ENCODE measurements at regions of chr3 and their contacts with region 1.

Region 1: DNA sequence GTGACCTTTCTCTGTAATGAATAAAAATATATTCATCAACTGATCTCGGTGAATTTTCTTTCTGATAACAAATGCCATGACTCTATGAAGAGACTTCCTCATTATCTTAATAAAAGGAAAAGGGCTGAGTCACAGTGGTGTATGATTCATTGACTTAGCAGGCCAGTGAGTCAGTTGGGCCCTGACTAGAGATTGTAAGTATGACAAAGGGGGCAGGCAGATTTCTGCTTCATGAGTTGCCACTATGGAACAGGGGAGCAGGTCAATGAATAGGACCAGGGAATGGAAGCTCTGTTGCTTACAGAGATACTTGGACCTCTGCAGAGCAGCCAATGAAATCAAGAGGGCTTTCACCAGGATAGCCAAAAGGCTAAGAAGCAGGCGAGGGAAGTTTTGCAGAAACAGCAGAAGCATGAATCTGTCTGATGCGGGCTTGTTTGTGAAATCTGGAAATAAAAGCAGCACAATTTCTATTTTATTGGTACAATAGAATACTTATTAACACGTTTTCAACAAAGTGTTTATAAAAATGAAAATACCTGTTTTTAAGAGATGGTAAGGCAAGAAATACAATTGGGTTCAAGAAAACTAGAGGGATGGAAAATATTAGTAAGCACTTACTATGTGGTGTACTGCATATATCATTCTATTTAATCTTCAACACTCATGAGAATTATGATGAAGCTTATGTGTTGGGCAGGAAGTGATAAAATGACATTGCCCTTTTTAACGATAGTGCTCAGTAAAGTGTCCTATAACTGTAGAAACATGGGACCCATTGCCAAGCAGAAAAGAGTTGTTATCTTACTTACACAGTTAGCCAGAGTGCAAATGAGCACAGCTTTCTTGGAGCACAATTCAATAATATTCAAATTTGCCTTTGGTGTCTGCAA is 169.8 kb upstream of the MYRIP start:
- DNase-seq: peak; percentile 95
- H3K4me3 ChIP-seq: peak overlapping the region in 1 of 3 experiments; percentile 21
- H3K27ac ChIP-seq: peak overlapping the region; percentile 97
- H3K4me1 ChIP-seq: peaks cover 32% of the 10 kb centered on the region
- H3K27me3 ChIP-seq: no peaks in the 10 kb centered on the region
- CTCF ChIP-seq: no peak
- POLR2A ChIP-seq: no peak

Region 2: GRCh38 chr3:39501968-39502837 is 137.4 kb before region 1 on chr3:
- CTCF ChIA-PET with region 1: no interaction called
- POLR2A ChIA-PET with region 1: no interaction called
- dilution Hi-C with region 1: no loop called
- intact Hi-C with region 1: loop called (anchors 1 kb)
- DNase-seq: no peak
- H3K4me3 ChIP-seq: peak overlapping the region; percentile 49 to 64 (median 63)
- H3K27ac ChIP-seq: peak overlapping the region; percentile 46
- H3K4me1 ChIP-seq: peaks cover 23% of the 10 kb centered on the region
- H3K27me3 ChIP-seq: peaks cover 0 to 6% of the 10 kb centered on the region in 2 experiments
- CTCF ChIP-seq: no peak
- POLR2A ChIP-seq: no peak

Region 3: DNA sequence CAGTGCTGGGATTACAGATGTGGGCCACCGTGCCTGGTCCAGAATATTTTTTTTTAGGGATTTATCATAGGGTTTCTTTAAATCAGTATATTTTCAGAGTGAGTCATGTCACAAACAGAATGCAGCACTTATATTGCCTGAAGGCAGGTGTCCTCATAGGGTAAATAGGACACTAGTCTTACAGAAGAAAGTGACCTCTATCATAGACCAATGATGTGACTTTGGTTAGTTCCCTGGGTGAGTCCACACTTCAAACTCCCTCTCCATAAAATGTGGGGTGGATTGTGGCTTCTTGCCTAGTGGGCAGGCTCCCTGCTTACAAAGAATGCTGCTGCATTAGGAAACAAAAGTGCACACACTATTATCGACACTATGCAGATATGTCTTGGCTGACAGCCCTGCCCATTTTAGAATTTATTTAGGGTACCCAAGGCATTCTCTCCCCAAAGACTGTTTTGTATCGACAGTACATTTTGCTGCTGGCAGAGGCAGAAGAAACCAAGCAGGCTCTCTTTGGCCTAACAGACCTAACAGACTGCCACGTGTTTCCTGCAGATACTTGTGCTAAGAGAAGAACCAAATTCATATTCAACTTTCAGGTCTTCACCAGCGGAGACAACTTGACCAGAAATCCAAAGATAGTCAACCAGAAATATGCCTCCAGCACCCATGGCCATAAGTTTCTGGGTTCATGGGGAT is 47.1 kb before region 1 on chr3:
- CTCF ChIA-PET with region 1: no interaction called
- POLR2A ChIA-PET with region 1: no interaction called
- dilution Hi-C with region 1: no loop called
- intact Hi-C with region 1: loop called (anchors 2 kb)
- DNase-seq: peak; percentile 64
- H3K4me3 ChIP-seq: no peak overlapping the region
- H3K27ac ChIP-seq: no peak overlapping the region
- H3K4me1 ChIP-seq: peaks cover 6% of the 10 kb centered on the region
- H3K27me3 ChIP-seq: no peaks in the 10 kb centered on the region
- CTCF ChIP-seq: no peak
- POLR2A ChIP-seq: no peak

Region 4: DNA sequence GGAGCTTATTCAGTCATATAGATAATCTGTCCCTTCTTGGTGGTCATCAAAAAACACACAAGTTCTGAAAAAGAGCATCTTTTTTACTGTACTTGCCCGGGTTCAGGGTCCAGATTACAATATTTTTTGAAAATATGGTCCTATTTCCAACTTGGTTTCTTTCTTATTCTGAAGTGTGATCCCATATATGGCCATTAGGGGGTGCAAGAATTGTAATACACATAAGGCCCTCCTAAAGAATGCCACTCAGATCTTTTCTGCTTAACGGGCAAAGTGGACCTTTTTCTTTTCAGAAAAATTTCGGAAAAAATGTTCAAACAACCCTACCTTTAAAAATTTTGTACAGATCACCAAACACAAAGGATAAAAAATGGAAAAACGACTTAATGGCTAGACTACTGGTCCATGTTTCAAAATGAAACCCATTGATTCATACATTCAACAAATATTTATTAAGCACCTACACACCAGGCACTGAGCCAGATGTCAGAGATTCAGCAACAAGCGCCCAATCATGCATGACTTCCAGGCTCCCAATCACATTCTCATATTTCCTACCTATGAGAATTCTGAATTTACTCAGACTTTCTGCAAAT is 67.8 kb after region 1 on chr3:
- CTCF ChIA-PET with region 1: interaction called, 3 read pairs
- POLR2A ChIA-PET with region 1: interaction called, 3 read pairs
- dilution Hi-C with region 1: no loop called
- intact Hi-C with region 1: loop called (anchors 2 kb)
- DNase-seq: peak; percentile 65
- H3K4me3 ChIP-seq: no peak overlapping the region
- H3K27ac ChIP-seq: no peak overlapping the region
- H3K4me1 ChIP-seq: peaks cover 7% of the 10 kb centered on the region
- H3K27me3 ChIP-seq: no peaks in the 10 kb centered on the region
- CTCF ChIP-seq: peak; percentile 39 to 61
- POLR2A ChIP-seq: no peak

Region 5: GRCh38 chr3:39809181-39809994 is 169.8 kb after region 1 on chr3 and contains the start of gene MYRIP:
- CTCF ChIA-PET with region 1: interaction called, 9 read pairs
- POLR2A ChIA-PET with region 1: no interaction called
- dilution Hi-C with region 1: no loop called
- intact Hi-C with region 1: loop called (anchors 1 kb)
- DNase-seq: peak; percentile 81
- H3K4me3 ChIP-seq: peak within 1 kb of the TSS; percentile 61 to 79 (median 70)
- H3K27ac ChIP-seq: no peak within 1 kb of the TSS
- H3K4me1 ChIP-seq: peaks cover 28% of the 10 kb centered on the region
- H3K27me3 ChIP-seq: no peaks in the 10 kb centered on the region
- CTCF ChIP-seq: no peak
- POLR2A ChIP-seq: peak; percentile 59
- total RNA-seq, gene MYRIP: 8.9 and 11.9 TPM in 2 replicates

Region 6: DNA sequence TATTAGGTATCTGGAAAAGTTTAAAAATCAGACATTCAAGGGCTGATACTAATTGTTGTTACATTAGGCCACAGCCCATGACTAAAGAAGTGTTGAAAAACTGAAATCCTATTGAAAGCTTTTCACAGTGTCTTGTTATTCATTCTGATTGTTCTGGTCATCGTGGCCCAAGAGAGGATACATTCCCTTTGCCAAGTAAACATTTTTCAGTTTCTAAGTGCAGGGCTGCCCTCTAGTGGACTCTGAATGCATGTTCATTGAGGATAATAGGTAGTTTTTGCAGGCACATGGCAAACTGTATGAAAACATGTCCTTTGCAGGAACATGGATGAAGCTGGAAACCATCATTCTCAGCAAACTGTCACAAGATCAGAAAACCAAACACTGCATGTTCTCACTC is 350.9 kb after region 1 on chr3:
- CTCF ChIA-PET with region 1: interaction called, 5 read pairs
- POLR2A ChIA-PET with region 1: no interaction called
- dilution Hi-C with region 1: no loop called
- intact Hi-C with region 1: loop called (anchors 1 kb)
- DNase-seq: peak; percentile 70
- H3K4me3 ChIP-seq: no peak overlapping the region
- H3K27ac ChIP-seq: no peak overlapping the region
- H3K4me1 ChIP-seq: no peaks in the 10 kb centered on the region
- H3K27me3 ChIP-seq: no peaks in the 10 kb centered on the region
- CTCF ChIP-seq: peak; percentile 34 to 36
- POLR2A ChIP-seq: no peak

Measured in endothelial cell of umbilical vein (primary cell).